ENCODE measurements at regions of chr6 and their contacts with region 1.

Region 1: GRCh38 chr6:10510592-10511367 is 10.4 kb upstream of the GCNT2 start:
- DNase-seq: peak; percentile 62 to 63
- ATAC-seq: peak; percentile 98 to 99
- H3K4me3 ChIP-seq: peak overlapping the region; percentile 22; the same call in 1 of the 3 replicates
- H3K27ac ChIP-seq: peak overlapping the region; percentile 51 to 74
- H3K4me1 ChIP-seq: peaks cover 27% of the 10 kb centered on the region
- CTCF ChIP-seq: peak; percentile 70
- EP300 ChIP-seq: no peak
- POLR2A ChIP-seq: no peak
- RAD21 ChIP-seq: peak; percentile 84 to 89

Region 2: DNA sequence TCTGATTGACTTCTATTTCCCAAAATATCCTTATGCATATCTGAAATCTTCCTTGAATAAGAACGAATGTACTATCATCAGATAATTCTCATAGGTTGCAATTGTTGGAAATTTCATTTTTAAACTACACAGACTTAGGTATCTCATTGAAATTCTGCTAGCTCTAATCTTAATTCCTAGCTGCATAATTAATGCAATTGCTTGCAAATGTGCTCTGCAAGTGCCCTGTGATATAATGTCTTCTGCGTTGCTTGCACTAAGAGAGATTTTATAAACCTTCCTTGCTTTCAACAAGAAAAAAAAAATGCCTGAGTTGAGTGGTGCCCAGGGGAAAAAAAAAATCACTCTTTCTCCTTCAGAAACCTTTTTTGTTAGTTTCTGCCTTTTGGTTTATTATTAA is 450.8 kb before region 1 on chr6:
- CTCF ChIA-PET with region 1: no interaction called
- POLR2A ChIA-PET with region 1: no interaction called
- DNase-seq: no peak
- ATAC-seq: no peak
- H3K4me3 ChIP-seq: no peak overlapping the region
- H3K27ac ChIP-seq: no peak overlapping the region
- H3K4me1 ChIP-seq: no peaks in the 10 kb centered on the region
- CTCF ChIP-seq: no peak
- EP300 ChIP-seq: no peak
- POLR2A ChIP-seq: no peak
- RAD21 ChIP-seq: no peak

Region 3: DNA sequence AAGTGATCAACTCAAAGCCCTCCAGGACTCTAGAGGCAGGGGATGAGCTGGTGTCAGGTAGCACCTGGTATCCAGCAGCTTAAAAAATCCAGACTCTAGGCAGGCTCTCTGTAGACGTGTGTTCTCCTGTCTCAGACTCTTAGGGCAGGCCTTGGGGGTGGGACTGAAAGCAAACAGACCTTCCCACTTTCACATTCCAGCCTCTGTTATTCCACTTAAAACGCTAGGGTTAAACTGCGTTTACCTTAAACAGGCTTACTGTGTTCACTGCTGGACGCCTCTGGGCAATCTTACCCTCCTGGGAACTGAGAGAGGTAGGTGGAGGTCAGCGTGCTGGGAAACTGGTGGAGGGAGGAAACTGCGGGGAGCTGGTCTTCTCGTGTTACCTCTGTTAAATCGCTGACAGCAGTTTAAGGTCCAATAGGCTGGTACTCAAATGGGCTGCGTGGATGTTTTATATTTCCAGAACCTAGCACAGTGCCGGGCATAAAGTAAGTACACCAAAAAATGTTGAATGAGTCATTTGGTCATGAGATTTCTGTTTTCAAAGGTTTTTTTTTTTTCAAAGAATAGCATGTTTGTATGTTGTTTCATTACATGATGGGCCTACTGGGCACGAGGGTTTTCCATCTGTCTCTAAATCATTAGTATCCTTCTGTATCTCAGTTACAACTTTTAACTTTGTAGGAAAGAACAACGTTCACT is 10.5 kb after region 1 on chr6 and contains the start of gene GCNT2:
- CTCF ChIA-PET with region 1: interaction called, 22 read pairs
- POLR2A ChIA-PET with region 1: interaction called, 7 read pairs
- DNase-seq: peak; percentile 46 to 90
- ATAC-seq: peak; percentile 88 to 93
- H3K4me3 ChIP-seq: peak within 1 kb of the TSS; percentile 34
- H3K27ac ChIP-seq: peak within 1 kb of the TSS; percentile 92
- H3K4me1 ChIP-seq: peaks cover 46% of the 10 kb centered on the region
- CTCF ChIP-seq: no peak
- EP300 ChIP-seq: no peak
- POLR2A ChIP-seq: peak; percentile 43
- RAD21 ChIP-seq: no peak
- polyA plus RNA-seq, gene GCNT2: 22.9 and 24.3 TPM in 2 replicates

Region 4: GRCh38 chr6:10531503-10531902 is 20.7 kb after region 1 on chr6:
- CTCF ChIA-PET with region 1: interaction called, 12 read pairs
- POLR2A ChIA-PET with region 1: no interaction called
- DNase-seq: no peak
- ATAC-seq: no peak
- H3K4me3 ChIP-seq: no peak overlapping the region; the same call in 2 of the 3 replicates
- H3K27ac ChIP-seq: 0 out of 6 replicates have a peak overlapping the region, but pooled peaks of 1 of the 2 experiments have one; percentile 36
- H3K4me1 ChIP-seq: peaks cover 24% of the 10 kb centered on the region
- CTCF ChIP-seq: no peak
- EP300 ChIP-seq: no peak
- POLR2A ChIP-seq: no peak
- RAD21 ChIP-seq: no peak

Region 5: GRCh38 chr6:10800829-10801535 is 290.2 kb after region 1 on chr6:
- CTCF ChIA-PET with region 1: interaction called, 38 read pairs
- POLR2A ChIA-PET with region 1: no interaction called
- DNase-seq: peak; percentile 56 to 60
- ATAC-seq: peak; percentile 99
- H3K4me3 ChIP-seq: no peak overlapping the region
- H3K27ac ChIP-seq: peak overlapping the region in 1 of 2 experiments; percentile 55; a peak in 2 of 6 replicates
- H3K4me1 ChIP-seq: peaks cover 7% of the 10 kb centered on the region; the same call in 2 of the 3 replicates
- CTCF ChIP-seq: peak; percentile 90
- EP300 ChIP-seq: no peak
- POLR2A ChIP-seq: no peak
- RAD21 ChIP-seq: peak; percentile 82 to 88

Measured in A549 (cell line).